ENCODE measurements at regions of chr17 and their contacts with region 1.

Region 1: GRCh38 chr17:36183001-36183971 is 6.8 kb upstream of the TBC1D3B start:
- ATAC-seq: peak; percentile 91 to 99 (median 96)
- H3K4me3 ChIP-seq: peak overlapping the region; percentile 36 to 51 (median 44)
- H3K27ac ChIP-seq: no peak overlapping the region
- H3K4me1 ChIP-seq: peaks cover 0 to 9% of the 10 kb centered on the region in 2 donors

Region 2: GRCh38 chr17:36008998-36009665 is 174.2 kb before region 1 on chr17:
- in situ Hi-C with region 1: no loop called
- ATAC-seq: no peak
- H3K4me3 ChIP-seq: no peak overlapping the region
- H3K27ac ChIP-seq: no peak overlapping the region
- H3K4me1 ChIP-seq: no peaks in the 10 kb centered on the region

Region 3: GRCh38 chr17:36486204-36487194 is 303.2 kb after region 1 on chr17 and contains the start of gene ZNHIT3:
- in situ Hi-C with region 1: loop called in 1 of 9 experiments (anchors 25 kb)
- ATAC-seq: peak; percentile 86 to 92 (median 88)
- H3K4me3 ChIP-seq: peak within 1 kb of the TSS; percentile 62 to 78 (median 69)
- H3K27ac ChIP-seq: peak within 1 kb of the TSS; percentile 75 to 82
- H3K4me1 ChIP-seq: peaks cover 11 to 18% of the 10 kb centered on the region in 2 donors
- total RNA-seq, gene ZNHIT3: 40.8 to 83.4 (median 64.4) TPM

Measured in motor neuron (in vitro differentiated cells).